ENCODE measurements at regions of chr12 and their contacts with region 1.

Region 1: DNA sequence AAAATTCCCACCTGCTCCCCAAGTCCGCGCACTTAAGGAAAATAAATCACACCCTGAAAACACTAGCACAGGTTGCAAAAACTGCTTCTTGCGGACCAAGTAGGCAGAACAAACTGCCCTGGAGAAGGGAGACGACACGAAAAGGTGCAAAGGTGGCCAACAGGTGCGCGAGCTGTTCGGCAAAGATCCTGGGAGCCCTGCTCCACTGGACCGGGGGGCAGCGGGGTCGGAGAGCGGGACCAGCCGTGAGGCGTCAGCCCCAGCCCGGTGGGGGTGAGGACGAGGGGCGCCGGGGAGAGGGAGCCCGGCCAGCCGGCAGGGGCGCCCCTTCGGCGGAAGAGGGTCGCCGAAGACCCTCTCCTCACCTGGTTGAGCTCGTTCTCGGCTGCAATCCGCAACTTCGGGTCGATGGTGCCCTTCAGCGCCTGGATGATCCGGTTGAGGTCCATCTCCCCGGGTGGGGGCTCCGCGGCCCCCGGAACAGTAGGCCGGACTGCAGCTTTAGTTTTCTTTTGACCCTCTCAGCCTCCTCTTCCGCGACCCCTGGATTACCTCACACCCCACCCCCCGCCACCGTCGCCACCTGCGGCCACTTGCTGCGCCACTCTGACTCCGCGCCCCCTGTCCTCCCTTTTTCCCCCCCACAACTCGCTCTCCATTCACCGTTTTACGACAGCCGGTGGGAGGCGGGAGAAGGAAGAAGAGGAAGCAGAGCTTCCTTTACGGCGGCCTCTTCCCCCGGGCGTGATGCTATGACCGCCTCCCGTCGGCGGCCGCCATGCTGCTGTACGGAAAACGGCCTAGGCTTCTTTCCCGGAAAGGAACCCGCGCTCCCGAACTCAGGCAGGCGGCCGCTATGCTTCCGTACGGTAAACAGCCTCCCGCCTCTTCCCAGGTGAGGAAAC is at the start of gene IPO8:
- DNase-seq: peak; percentile 93 to 96 (median 94)
- ATAC-seq: peak; percentile 95 to 98 (median 96)
- H3K4me3 ChIP-seq: peak within 1 kb of the TSS; percentile 84 to 99 (median 96)
- H3K27ac ChIP-seq: peak within 1 kb of the TSS; percentile 21 to 88 (median 74)
- H3K4me1 ChIP-seq: peaks cover 0 to 42% (median 26%) of the 10 kb centered on the region in 12 donors
- H3K27me3 ChIP-seq: no peaks in the 10 kb centered on the region
- CTCF ChIP-seq: peak in 5 of 12 donors; percentile 22 to 43 (median 26)
- POLR2A ChIP-seq: peak in 1 of 2 donors; percentile 25
- total RNA-seq, gene IPO8: 16.9 to 37.2 (median 28.7) TPM

Region 2: DNA sequence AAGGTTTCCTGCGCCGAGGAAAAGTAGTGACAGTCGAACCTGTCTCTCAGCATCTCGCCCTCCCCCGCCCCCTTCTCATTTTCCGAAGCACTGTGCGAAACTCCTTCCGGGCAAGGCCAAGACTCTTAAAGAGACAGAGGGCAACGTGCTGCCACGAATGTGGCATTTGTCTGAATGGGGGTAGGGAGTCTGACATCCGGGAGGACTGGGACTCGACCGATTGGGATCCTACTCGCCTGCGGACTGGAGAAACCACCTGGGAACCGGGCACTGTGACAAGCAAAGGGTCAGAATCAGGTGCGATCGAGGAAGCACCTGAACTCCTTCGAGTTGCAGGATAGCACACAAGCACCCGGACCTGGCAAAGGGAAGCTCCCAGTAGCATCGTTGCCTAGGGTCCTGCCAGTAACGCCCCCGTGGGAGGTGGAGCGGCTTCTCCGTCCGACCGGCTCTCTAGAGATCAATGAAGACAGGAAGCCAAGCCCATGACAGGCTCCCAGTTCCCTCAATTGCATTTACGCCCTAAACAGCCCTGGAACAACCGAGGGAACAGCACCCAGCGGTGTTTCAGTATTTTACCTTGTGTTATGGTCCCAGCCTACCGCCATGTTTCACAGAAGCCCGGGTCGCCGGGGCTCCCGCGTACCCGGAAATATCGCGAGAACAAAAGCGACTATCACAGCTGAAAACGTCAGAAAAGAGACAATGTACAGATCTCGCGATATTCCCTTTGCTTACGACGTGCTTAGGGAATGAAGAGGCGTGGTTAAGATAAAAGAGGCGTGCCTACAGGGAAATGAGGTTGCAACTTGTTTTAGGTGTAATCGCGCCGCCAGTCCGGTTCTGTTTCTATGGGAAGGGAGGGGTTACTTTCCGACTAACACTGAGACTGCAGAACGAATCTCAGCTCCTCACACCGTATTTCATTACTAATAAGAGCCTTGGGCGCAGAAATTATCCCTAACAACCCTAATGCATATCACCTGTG is 1314.6 kb before region 1 on chr12 and contains the start of gene ERGIC2:
- intact Hi-C with region 1: loop called in 1 of 10 experiments (anchors 10 kb)
- DNase-seq: peak; percentile 90 to 93 (median 91)
- ATAC-seq: peak; percentile 98 to 99 (median 98)
- H3K4me3 ChIP-seq: peak within 1 kb of the TSS; percentile 66 to 99 (median 84)
- H3K27ac ChIP-seq: peak within 1 kb of the TSS; percentile 39 to 93 (median 82)
- H3K4me1 ChIP-seq: peaks cover 0 to 21% (median 14%) of the 10 kb centered on the region in 12 donors
- H3K27me3 ChIP-seq: no peaks in the 10 kb centered on the region
- CTCF ChIP-seq: no peak
- POLR2A ChIP-seq: no peak
- total RNA-seq, gene ERGIC2: 45.5 to 123 (median 84.8) TPM

Region 3: GRCh38 chr12:30746190-30746589 is 50.7 kb after region 1 on chr12:
- intact Hi-C with region 1: loop called in 5 of 10 experiments (anchors 5 kb)
- DNase-seq: no peak
- ATAC-seq: no peak
- H3K4me3 ChIP-seq: no peak overlapping the region
- H3K27ac ChIP-seq: no peak overlapping the region
- H3K4me1 ChIP-seq: peaks cover 0 to 9% (median under 1%) of the 10 kb centered on the region in 12 donors
- H3K27me3 ChIP-seq: no peaks in the 10 kb centered on the region
- CTCF ChIP-seq: no peak
- POLR2A ChIP-seq: no peak

Region 4: DNA sequence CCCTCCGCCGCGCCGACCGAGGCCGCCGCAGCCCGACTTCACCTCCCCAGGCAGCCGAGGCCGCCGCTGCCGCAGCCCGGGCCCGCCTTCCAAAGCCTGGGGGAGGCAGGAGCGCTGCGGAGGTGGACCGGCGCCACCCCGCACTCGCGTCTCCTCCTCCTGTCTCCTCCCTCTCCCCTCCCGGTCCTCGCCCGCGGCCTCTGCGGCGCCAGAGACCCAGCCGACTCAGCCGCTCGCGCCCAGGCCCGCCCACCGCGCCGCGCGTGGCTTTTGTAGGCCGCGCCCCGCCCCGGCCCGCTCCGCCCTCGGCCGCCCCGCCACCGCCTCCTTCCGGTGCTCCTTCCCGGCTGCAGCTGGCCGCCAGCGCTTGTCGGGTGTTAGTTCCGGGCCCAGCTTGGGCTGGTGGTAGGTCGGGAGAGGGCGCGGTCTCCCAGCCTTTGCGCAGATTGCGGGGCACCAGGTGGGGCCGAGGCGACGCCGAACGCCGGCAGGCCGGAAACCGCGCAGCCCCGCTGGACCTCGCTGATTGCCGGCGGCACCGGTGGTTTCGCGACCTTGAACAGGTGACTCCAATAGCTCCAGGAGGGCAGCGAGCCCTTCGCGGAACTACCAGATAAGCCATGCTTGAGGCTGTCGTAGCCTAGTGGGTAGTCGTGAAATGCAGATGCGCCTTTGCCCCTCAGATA is 59.4 kb after region 1 on chr12 and contains the start of gene CAPRIN2:
- intact Hi-C with region 1: loop called in 7 of 10 experiments (anchors 2 to 5 kb)
- DNase-seq: peak; percentile 96 to 99 (median 97)
- ATAC-seq: peak; percentile 96 to 99 (median 98)
- H3K4me3 ChIP-seq: peak within 1 kb of the TSS; percentile 59 to 99 (median 82)
- H3K27ac ChIP-seq: peak within 1 kb of the TSS; percentile 75 to 93 (median 88)
- H3K4me1 ChIP-seq: peaks cover 0 to 30% (median 13%) of the 10 kb centered on the region in 12 donors
- H3K27me3 ChIP-seq: no peaks in the 10 kb centered on the region
- CTCF ChIP-seq: peak in 10 of 12 donors; percentile 20 to 68 (median 46)
- POLR2A ChIP-seq: peak in 1 of 2 donors; percentile 79
- total RNA-seq, gene CAPRIN2: 15.3 to 33.6 (median 30.4) TPM

Region 5: GRCh38 chr12:30813525-30814294 is 118.3 kb after region 1 on chr12:
- intact Hi-C with region 1: loop called in 4 of 10 experiments (anchors 5 to 10 kb)
- DNase-seq: no peak
- ATAC-seq: no peak
- H3K4me3 ChIP-seq: no peak overlapping the region
- H3K27ac ChIP-seq: no peak overlapping the region
- H3K4me1 ChIP-seq: no peaks in the 10 kb centered on the region
- H3K27me3 ChIP-seq: no peaks in the 10 kb centered on the region
- CTCF ChIP-seq: no peak
- POLR2A ChIP-seq: no peak

Region 6: GRCh38 chr12:30870491-30871265 is 175.2 kb after region 1 on chr12:
- intact Hi-C with region 1: no loop called
- DNase-seq: no peak
- ATAC-seq: no peak
- H3K4me3 ChIP-seq: no peak overlapping the region
- H3K27ac ChIP-seq: no peak overlapping the region
- H3K4me1 ChIP-seq: peaks cover 0 to 13% (median 0%) of the 10 kb centered on the region in 12 donors
- H3K27me3 ChIP-seq: peaks cover 0 to 5% (median 0%) of the 10 kb centered on the region in 9 donors
- CTCF ChIP-seq: no peak
- POLR2A ChIP-seq: no peak